ENCODE measurements at regions of chr5 and their contacts with region 1.

Region 1: DNA sequence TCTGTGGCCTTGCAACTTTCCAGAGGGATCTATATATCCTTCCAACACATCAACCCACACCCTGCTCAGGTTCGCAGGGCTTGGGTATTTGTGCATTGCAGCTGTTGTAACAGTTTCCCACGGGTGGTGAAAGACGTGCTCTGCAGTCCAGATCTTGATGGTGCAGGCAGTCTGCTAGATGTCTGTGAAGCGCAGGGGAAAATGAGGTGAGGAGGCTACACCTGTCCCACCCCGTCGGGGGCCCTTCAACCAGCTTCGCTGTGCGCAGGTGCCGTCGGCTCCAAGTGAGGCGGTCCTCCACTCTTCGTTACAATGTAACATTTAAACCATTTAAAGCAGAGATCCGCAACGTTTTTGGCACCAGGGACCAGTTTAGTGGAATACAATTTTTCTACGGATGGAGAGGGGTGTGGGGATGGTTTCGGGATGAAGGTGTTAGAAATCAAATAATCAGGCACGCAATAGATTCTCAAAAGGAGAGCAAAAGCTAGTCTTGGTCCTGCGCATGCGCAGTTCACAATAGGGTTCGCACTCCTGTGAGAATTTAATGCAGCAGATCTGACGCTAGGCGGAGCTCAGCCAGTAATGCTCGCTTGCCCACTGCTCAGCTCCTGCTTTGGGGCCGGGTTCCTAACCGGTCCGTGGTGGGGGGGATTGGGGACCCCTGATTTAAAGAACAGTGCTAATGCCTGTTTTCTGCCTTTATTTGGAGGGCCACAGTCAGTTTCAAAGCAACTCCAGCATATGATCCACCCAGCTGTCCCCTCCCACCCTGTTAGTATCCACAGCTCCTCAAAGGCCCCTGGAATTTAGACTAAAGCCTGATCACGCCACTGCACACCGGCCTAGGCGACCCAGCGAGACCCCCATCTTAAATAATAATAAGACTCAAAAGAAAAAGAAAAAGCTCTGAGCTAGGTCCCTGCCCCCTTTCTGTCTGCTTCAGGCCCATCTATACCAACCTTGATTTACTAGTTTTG is 97.1 kb upstream of the SELENOP start:
- DNase-seq: peak; percentile 71
- ATAC-seq: peak; percentile 94
- H3K4me3 Mint-ChIP-seq: peak overlapping the region; percentile 93
- H3K27ac Mint-ChIP-seq: peak overlapping the region; percentile 84
- H3K4me1 Mint-ChIP-seq: peaks cover 12% of the 10 kb centered on the region
- H3K27me3 Mint-ChIP-seq: peaks cover 11% of the 10 kb centered on the region
- CTCF ChIP-seq: peak; percentile 50

Region 2: GRCh38 chr5:42858031-42858643 is 50.7 kb before region 1 on chr5:
- CTCF ChIA-PET with region 1: no interaction called
- POLR2A ChIA-PET with region 1: no interaction called
- intact Hi-C with region 1: no loop called
- DNase-seq: no peak
- ATAC-seq: no peak
- H3K4me3 Mint-ChIP-seq: no peak overlapping the region
- H3K27ac Mint-ChIP-seq: no peak overlapping the region
- H3K4me1 Mint-ChIP-seq: no peaks in the 10 kb centered on the region
- H3K27me3 Mint-ChIP-seq: peaks cover 18% of the 10 kb centered on the region
- CTCF ChIP-seq: no peak

Region 3: GRCh38 chr5:42950440-42951292 is 41.9 kb after region 1 on chr5:
- CTCF ChIA-PET with region 1: interaction called, 33 read pairs
- POLR2A ChIA-PET with region 1: interaction called, 22 read pairs
- intact Hi-C with region 1: loop called (anchors 1 kb)
- DNase-seq: no peak
- ATAC-seq: peak; percentile 48
- H3K4me3 Mint-ChIP-seq: peak overlapping the region; percentile 94
- H3K27ac Mint-ChIP-seq: peak overlapping the region; percentile 98
- H3K4me1 Mint-ChIP-seq: peaks cover 33% of the 10 kb centered on the region
- H3K27me3 Mint-ChIP-seq: no peaks in the 10 kb centered on the region
- CTCF ChIP-seq: no peak

Region 4: DNA sequence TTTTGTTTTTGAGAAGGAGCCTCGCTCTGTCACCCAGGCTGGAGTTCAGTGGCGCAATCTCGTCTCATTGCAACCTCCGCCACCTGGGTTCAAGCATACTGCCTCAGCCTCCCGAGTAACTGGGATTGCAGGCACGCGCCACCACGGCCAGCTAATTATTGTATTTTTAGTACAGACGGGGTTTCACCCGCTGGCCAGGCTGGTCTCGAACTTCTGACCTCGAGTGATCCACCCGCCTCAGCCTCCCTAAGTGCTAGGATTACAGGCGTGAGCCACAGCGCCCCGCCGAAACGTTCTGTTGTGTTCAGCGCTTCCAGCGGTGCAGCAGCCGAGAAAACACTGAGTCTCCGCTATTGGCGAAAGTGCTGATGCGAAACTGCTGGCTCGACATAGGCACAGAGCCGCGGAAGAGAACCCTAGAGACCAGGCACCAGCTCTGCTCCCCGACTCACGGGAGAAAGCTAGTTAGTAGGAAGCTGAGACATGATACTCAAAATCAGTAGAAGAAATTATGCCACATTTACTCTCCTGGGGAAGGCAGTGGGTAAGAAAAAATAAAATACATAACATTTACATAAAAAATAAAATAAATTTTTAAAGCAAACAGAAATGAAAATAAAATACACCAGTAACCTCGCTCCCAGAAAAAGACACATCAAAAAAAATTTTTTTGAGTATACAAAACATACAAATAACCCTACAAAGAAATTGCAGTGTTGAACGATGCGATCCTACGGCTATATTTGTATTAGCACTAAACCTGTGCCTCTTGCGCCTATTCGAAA is 99.8 kb after region 1 on chr5:
- CTCF ChIA-PET with region 1: no interaction called
- POLR2A ChIA-PET with region 1: interaction called, 14 read pairs
- intact Hi-C with region 1: no loop called
- DNase-seq: peak; percentile 77
- ATAC-seq: peak; percentile 53
- H3K4me3 Mint-ChIP-seq: peak overlapping the region; percentile 89
- H3K27ac Mint-ChIP-seq: peak overlapping the region; percentile 98
- H3K4me1 Mint-ChIP-seq: peaks cover 31% of the 10 kb centered on the region
- H3K27me3 Mint-ChIP-seq: no peaks in the 10 kb centered on the region
- CTCF ChIP-seq: no peak

Region 5: GRCh38 chr5:43066799-43067741 is 158.3 kb after region 1 on chr5:
- CTCF ChIA-PET with region 1: interaction called, 11 read pairs
- POLR2A ChIA-PET with region 1: interaction called, 10 read pairs
- intact Hi-C with region 1: loop called (anchors 1 kb)
- DNase-seq: peak; percentile 83
- ATAC-seq: peak; percentile 55
- H3K4me3 Mint-ChIP-seq: peak overlapping the region; percentile 95
- H3K27ac Mint-ChIP-seq: peak overlapping the region; percentile 99
- H3K4me1 Mint-ChIP-seq: peaks cover 40% of the 10 kb centered on the region
- H3K27me3 Mint-ChIP-seq: no peaks in the 10 kb centered on the region
- CTCF ChIP-seq: no peak

Region 6: GRCh38 chr5:43305948-43306565 is 397.3 kb after region 1 on chr5:
- CTCF ChIA-PET with region 1: interaction called, 6 read pairs
- POLR2A ChIA-PET with region 1: no interaction called
- intact Hi-C with region 1: loop called (anchors 1 kb)
- DNase-seq: no peak
- ATAC-seq: peak; percentile 60
- H3K4me3 Mint-ChIP-seq: no peak overlapping the region
- H3K27ac Mint-ChIP-seq: no peak overlapping the region
- H3K4me1 Mint-ChIP-seq: peaks cover 57% of the 10 kb centered on the region
- H3K27me3 Mint-ChIP-seq: no peaks in the 10 kb centered on the region
- CTCF ChIP-seq: no peak

Measured in activated B cell treated with CpG ODN at 0.5 μM for 24 hours (primary cell).